Activated T-helper 2 cell treated with anti-CD3 and anti-CD28 coated beads, Interferon-gamma antibody, Interleukin-2, Interleukin-4, amounts not matched to agents 10 μg/mL and 5 μg/mL and 100 μg/mL, durations not matched to agents 14 hours and 24 hours and 36 hours (primary cell): ENCODE measurements at regions of chr6 and their contacts with region 1.

Region 1: GRCh38 chr6:45663551-45664221 is 286.0 kb upstream of the SUPT3H start:
- DNase-seq: peak; percentile 27
- H3K4me3 Mint-ChIP-seq: peak overlapping the region; percentile 43
- H3K27ac Mint-ChIP-seq: peak overlapping the region; percentile 56
- H3K4me1 Mint-ChIP-seq: peaks cover 70% of the 10 kb centered on the region
- H3K27me3 Mint-ChIP-seq: peaks cover 4% of the 10 kb centered on the region

Region 2: GRCh38 chr6:45411959-45412358 is 251.7 kb before region 1 on chr6:
- intact Hi-C with region 1: no loop called
- DNase-seq: no peak
- H3K4me3 Mint-ChIP-seq: no peak overlapping the region
- H3K27ac Mint-ChIP-seq: no peak overlapping the region
- H3K4me1 Mint-ChIP-seq: peaks cover 26% of the 10 kb centered on the region
- H3K27me3 Mint-ChIP-seq: no peaks in the 10 kb centered on the region

Region 3: DNA sequence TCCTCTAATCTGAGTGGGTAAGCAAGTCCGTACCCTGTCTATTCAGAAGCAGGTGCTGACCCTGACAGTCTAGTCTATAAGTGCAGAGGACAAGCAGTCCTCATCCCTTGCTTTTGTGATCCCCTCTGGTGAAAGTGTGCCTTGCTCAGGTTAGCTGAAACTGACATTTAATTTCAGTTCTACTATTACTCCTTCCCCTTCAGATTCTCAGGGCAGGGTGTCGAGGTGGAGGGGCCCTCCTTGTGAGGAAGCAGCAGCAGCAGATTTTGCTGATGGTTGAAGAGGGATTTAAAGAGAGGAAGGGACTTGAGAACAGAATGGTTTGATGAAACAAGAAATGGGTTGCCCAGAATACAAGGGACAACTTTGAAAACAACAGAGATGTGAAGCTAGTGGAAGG is 42.6 kb after region 1 on chr6:
- intact Hi-C with region 1: loop called (anchors 2 kb)
- DNase-seq: no peak
- H3K4me3 Mint-ChIP-seq: no peak overlapping the region
- H3K27ac Mint-ChIP-seq: no peak overlapping the region
- H3K4me1 Mint-ChIP-seq: peaks cover 53% of the 10 kb centered on the region
- H3K27me3 Mint-ChIP-seq: no peaks in the 10 kb centered on the region